ENCODE measurements at regions of chr1 and their contacts with region 1.

Region 1: GRCh38 chr1:159197561-159198557 is 6.8 kb upstream of the ACKR1 start:
- DNase-seq: peak; percentile 37
- ATAC-seq: peak; percentile 94
- H3K4me3 Mint-ChIP-seq: no peak overlapping the region
- H3K27ac Mint-ChIP-seq: no peak overlapping the region
- H3K4me1 Mint-ChIP-seq: no peaks in the 10 kb centered on the region
- H3K27me3 Mint-ChIP-seq: peaks cover 26% of the 10 kb centered on the region
- CTCF ChIP-seq: no peak

Region 2: DNA sequence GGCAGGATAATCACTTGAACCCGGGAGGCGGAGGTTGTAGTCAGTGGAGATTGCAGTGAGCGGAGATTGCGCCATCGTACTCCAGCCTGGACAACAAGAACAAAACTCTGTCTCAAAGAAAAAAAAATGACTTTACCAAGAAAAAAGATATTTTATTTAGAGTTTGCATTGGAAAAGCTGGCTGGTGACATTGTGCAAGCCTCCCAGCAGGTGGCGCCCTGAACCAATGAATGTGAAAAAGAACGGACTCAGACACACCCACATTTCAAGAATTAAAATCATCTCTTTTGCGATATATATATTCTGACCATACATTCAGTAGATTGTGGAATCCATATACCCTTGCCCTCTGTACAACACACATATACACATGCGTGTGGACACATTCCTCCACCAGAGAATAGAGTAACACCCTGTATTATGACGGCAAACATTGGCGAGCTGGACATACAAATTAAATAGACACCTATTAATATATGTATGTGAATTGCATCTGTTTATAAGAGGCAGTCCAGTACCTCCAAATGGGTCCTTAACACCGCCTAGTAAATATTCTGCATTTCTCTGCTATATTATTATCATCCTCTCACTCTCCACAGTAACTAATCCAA is 65.5 kb before region 1 on chr1:
- CTCF ChIA-PET with region 1: interaction called, 17 read pairs
- POLR2A ChIA-PET with region 1: no interaction called
- intact Hi-C with region 1: loop called (anchors 1 kb)
- DNase-seq: peak; percentile 53
- ATAC-seq: peak; percentile 61
- H3K4me3 Mint-ChIP-seq: no peak overlapping the region
- H3K27ac Mint-ChIP-seq: no peak overlapping the region
- H3K4me1 Mint-ChIP-seq: peaks cover 2% of the 10 kb centered on the region
- H3K27me3 Mint-ChIP-seq: no peaks in the 10 kb centered on the region
- CTCF ChIP-seq: no peak

Region 3: DNA sequence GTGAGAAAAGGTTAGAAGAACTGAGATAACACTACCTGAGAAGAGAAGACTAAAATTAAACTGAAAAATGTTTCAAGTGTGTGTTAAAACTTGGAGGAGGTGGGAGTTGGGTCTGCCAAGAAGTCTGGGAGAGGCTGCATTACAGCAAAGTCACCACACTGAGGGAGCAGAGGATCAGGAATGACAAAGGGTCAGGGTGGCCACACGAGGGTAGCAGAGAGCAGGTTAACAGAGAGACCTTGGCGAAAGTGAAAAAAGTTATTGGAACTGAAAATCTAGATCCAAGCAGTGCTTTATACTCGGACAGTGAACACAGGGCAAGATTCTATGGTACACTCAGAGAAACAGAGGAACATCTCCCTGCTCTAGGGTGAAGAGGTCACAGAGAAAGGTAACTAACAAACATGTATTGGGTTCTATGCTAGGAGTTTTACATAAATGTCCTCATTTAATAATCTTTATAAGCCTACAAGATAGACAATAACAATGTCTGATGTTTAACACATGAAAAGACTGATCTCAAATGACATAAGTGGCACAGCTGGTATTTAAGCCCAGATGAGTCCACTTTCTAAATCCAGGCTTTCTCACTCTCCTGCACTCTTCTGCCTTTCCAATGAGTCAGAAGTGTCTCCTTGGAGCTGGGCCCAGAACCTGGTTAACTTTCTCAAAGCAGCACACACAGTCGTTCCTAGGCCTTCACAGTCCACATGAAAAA is 36.7 kb before region 1 on chr1:
- CTCF ChIA-PET with region 1: interaction called, 60 read pairs
- POLR2A ChIA-PET with region 1: no interaction called
- intact Hi-C with region 1: loop called (anchors 1 kb)
- DNase-seq: peak; percentile 49
- ATAC-seq: peak; percentile 98
- H3K4me3 Mint-ChIP-seq: no peak overlapping the region
- H3K27ac Mint-ChIP-seq: no peak overlapping the region
- H3K4me1 Mint-ChIP-seq: peaks cover 7% of the 10 kb centered on the region
- H3K27me3 Mint-ChIP-seq: no peaks in the 10 kb centered on the region
- CTCF ChIP-seq: peak; percentile 38

Region 4: DNA sequence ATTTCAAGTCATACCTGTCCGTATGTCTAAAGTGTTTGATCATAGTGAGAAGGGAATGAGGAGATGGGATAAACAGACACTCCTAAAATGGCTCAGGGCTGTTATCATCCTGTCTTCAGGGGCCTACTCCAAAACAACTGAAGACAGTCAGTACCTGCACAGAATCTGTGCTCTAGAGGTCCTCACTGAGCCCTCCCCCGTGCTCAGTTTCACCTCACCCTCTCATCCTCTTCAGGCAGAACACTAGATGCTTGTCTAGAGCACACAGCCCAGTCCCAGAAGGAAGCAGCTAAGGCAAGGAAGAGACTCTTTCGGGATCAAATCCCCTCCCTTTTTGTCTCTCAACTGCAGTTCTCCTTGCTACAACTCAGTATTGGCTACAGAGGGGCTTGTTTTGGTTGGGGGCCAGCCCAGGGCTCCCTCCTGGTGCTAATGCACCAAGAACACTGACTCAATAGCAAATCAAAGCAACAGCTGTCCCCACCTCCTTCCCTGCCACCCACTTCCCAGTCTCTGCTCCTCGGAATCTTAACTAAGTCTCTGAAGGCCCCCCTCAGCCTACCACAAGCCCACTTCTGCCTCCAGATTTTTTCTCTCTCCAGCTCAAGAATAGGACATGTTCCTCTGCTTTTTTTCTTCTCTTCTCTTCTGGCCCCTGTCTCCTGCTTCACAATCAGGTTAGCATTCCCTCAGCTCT is 16.4 kb before region 1 on chr1:
- CTCF ChIA-PET with region 1: interaction called, 3 read pairs
- POLR2A ChIA-PET with region 1: no interaction called
- intact Hi-C with region 1: loop called (anchors 2 kb)
- DNase-seq: no peak
- ATAC-seq: no peak
- H3K4me3 Mint-ChIP-seq: no peak overlapping the region
- H3K27ac Mint-ChIP-seq: no peak overlapping the region
- H3K4me1 Mint-ChIP-seq: peaks cover 18% of the 10 kb centered on the region
- H3K27me3 Mint-ChIP-seq: no peaks in the 10 kb centered on the region
- CTCF ChIP-seq: no peak

Measured in activated B cell treated with CpG ODN at 0.5 μM for 24 hours (primary cell).